Ovary (tissue), 10 donors: ENCODE measurements at regions of chr13 and their contacts with region 1.

Region 1: GRCh38 chr13:30114571-30115256 is 192.6 kb downstream of the KATNAL1 start:
- DNase-seq: peak; percentile 80 to 93 (median 88)
- H3K4me3 ChIP-seq: peak overlapping the region; percentile 54
- H3K27ac ChIP-seq: peak overlapping the region; percentile 27 to 50
- H3K4me1 ChIP-seq: peaks cover 2% of the 10 kb centered on the region
- H3K27me3 ChIP-seq: no peaks in the 10 kb centered on the region
- CTCF ChIP-seq: peak; percentile 54 to 89 (median 79)
- EP300 ChIP-seq: no peak
- POLR2A ChIP-seq: no peak

Region 2: DNA sequence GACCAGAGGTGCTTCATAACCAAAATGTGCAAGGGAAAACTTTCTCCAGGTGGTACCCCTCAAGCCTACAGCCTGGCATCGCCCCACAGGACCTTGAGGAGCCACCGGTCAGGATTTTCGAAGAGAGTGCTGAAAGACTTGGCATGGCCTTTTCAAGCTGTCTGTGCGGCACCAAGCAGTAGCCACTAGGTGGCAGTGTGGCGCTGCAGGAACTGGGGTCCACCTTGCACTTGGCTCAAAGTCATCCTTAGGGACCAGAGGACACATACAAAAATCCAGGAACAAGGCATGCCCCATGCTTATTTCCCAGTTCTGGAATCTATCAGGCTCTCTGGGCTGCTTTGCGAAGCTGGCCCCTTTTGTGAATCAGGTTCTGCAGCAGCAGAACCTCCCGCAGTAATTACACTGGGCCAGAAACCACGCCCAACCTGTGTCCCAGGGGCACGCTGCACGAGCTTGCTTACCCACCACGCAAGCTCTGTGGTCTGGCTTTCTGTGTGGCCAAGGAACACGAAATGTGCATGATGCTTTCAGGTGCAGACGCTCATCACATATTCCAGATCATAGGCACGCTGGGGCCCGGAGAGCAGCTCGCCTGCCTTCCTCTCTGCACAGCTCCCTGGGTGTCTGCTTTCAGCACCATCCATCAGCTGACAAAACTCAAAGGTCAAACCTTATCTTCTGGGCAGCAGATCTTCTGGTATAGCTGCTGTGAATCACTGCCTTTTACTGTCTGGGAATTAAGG is 606.4 kb before region 1 on chr13:
- intact Hi-C with region 1: loop called (anchors 2 to 5 kb)
- DNase-seq: peak; percentile 80 to 89 (median 86)
- H3K4me3 ChIP-seq: no peak overlapping the region
- H3K27ac ChIP-seq: no peak overlapping the region
- H3K4me1 ChIP-seq: peaks cover 6% of the 10 kb centered on the region
- H3K27me3 ChIP-seq: no peaks in the 10 kb centered on the region
- CTCF ChIP-seq: peak; percentile 82 to 94 (median 85)
- EP300 ChIP-seq: no peak
- POLR2A ChIP-seq: no peak

Region 3: DNA sequence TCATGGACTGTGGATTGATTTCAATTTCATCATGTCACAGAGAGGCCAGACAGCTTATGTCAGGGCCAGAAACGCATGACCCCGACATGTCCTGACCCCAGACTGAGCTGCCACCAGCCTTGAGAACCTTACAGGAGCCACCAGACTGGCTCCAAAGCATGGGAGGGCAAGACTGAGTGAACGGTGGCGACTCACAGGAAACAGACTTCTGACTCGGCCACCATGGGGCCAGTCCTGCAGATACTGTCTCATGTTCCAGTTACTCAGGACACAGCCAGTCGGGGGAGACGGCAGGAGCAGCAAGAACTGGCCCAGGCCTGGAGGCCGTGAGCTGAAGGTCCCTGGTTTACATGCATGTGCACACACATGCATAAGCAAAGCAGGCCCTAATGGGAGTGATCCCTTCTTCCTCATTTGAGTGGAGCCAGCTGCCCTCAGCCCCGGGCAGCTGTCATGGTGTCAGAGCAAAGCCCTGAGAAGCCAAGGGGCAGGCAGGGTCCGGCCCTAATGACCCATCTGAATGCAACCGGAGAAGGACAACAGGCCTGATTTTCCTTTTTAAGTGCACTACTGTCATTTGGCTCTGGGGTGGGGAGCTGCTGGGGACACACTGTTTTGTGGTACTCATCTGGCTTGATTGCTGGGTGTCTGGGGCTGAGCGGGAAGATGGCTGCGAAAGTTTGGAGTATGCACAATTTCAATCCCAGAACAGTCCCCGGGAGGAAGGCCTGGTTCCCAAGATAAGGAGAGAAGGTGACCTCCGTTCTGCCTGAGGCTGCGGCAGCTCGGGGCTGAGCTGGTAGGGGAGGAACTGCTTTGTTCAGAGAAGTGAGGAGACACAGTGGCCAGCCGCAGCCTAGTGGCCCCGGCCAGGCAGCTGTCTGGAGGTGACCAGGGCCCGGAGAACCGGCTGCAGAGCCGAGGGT is 601.1 kb before region 1 on chr13:
- intact Hi-C with region 1: loop called (anchors 2 to 5 kb)
- DNase-seq: no peak
- H3K4me3 ChIP-seq: no peak overlapping the region
- H3K27ac ChIP-seq: no peak overlapping the region
- H3K4me1 ChIP-seq: peaks cover 2% of the 10 kb centered on the region
- H3K27me3 ChIP-seq: no peaks in the 10 kb centered on the region
- CTCF ChIP-seq: no peak
- EP300 ChIP-seq: no peak
- POLR2A ChIP-seq: no peak

Region 4: DNA sequence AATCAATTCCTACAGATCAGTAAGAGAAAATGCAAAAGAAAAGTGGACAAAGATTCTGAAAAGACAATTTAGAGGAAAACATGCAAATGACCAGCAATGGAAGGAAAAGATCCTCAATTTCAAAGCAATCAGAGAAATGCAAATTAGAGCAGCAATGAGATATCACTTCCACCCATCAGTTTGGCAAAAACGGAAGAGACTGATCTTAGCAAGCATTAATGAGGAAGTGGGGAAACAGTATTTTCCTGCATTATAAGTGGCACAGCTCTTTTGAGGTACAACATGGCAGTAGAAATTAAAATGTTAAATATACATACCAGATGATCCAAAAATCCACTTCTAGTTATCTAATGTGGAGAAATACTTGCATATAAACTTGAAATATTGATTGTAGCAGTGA is 450.1 kb before region 1 on chr13:
- intact Hi-C with region 1: no loop called
- DNase-seq: no peak
- H3K4me3 ChIP-seq: no peak overlapping the region
- H3K27ac ChIP-seq: no peak overlapping the region
- H3K4me1 ChIP-seq: no peaks in the 10 kb centered on the region
- H3K27me3 ChIP-seq: no peaks in the 10 kb centered on the region
- CTCF ChIP-seq: no peak
- EP300 ChIP-seq: no peak
- POLR2A ChIP-seq: no peak

Region 5: GRCh38 chr13:29763436-29764180 is 351.1 kb before region 1 on chr13:
- intact Hi-C with region 1: loop called in 2 of 4 experiments (anchors 5 to 10 kb)
- DNase-seq: no peak
- H3K4me3 ChIP-seq: no peak overlapping the region
- H3K27ac ChIP-seq: no peak overlapping the region
- H3K4me1 ChIP-seq: no peaks in the 10 kb centered on the region
- H3K27me3 ChIP-seq: no peaks in the 10 kb centered on the region
- CTCF ChIP-seq: no peak
- EP300 ChIP-seq: no peak
- POLR2A ChIP-seq: no peak

Region 6: GRCh38 chr13:29771247-29771646 is 343.5 kb before region 1 on chr13:
- intact Hi-C with region 1: loop called (anchors 5 to 10 kb)
- DNase-seq: no peak
- H3K4me3 ChIP-seq: no peak overlapping the region
- H3K27ac ChIP-seq: no peak overlapping the region
- H3K4me1 ChIP-seq: no peaks in the 10 kb centered on the region
- H3K27me3 ChIP-seq: no peaks in the 10 kb centered on the region
- CTCF ChIP-seq: peak in 1 of 3 donors; percentile 39
- EP300 ChIP-seq: no peak
- POLR2A ChIP-seq: no peak

Region 7: DNA sequence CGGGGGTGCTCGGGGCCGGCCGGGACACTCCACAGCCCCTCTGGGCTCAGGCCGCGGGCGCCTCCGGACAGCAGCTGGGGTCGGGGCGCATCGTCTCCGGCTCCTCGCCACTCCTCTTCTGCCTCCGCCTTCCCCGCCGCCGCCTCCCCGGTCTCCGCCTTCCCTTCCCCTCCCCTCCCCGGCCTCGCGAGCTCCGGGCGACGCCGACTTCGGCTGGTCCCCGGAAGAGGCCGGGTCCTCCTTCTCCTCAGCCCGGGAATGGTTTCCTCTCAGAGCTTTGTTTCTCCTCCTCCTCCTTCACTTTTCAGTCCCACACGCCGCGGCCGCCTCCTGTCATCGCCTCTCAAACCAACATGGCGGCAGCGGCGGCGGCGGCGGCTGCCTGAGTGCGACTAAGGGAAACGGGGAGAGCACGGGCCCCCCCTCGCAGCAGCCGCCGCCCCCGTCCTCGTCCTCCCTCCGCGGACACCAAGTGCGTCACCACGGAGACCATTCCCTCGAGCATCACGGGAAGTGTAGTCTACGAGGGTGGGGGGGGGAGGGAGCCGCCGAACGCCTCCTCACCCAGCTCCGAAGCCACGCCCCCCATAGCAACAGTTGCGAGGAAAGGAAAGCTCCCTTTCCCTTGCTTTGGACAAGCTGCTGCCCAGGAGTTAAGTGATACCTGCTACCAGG is 264.4 kb before region 1 on chr13 and contains the start of gene UBL3:
- intact Hi-C with region 1: loop called in 1 of 4 experiments (anchors 10 kb)
- DNase-seq: peak; percentile 96 to 98 (median 97)
- H3K4me3 ChIP-seq: peak within 1 kb of the TSS; percentile 89
- H3K27ac ChIP-seq: peak within 1 kb of the TSS; percentile 96 to 97
- H3K4me1 ChIP-seq: no peaks in the 10 kb centered on the region
- H3K27me3 ChIP-seq: no peaks in the 10 kb centered on the region
- CTCF ChIP-seq: peak in 1 of 3 donors; percentile 18
- EP300 ChIP-seq: no peak
- POLR2A ChIP-seq: peak; percentile 89
- total RNA-seq, gene UBL3: 30.9 to 41.4 (median 35.7) TPM

Region 8: GRCh38 chr13:30132623-30133553 is 18.2 kb after region 1 on chr13:
- intact Hi-C with region 1: no loop called
- DNase-seq: peak; percentile 97 to 99 (median 98)
- H3K4me3 ChIP-seq: no peak overlapping the region
- H3K27ac ChIP-seq: no peak overlapping the region
- H3K4me1 ChIP-seq: peaks cover 2% of the 10 kb centered on the region
- H3K27me3 ChIP-seq: no peaks in the 10 kb centered on the region
- CTCF ChIP-seq: peak; percentile 81 to 93 (median 89)
- EP300 ChIP-seq: no peak
- POLR2A ChIP-seq: no peak

Region 9: GRCh38 chr13:30241532-30241931 is 126.8 kb after region 1 on chr13:
- intact Hi-C with region 1: no loop called
- DNase-seq: no peak
- H3K4me3 ChIP-seq: no peak overlapping the region
- H3K27ac ChIP-seq: no peak overlapping the region
- H3K4me1 ChIP-seq: no peaks in the 10 kb centered on the region
- H3K27me3 ChIP-seq: no peaks in the 10 kb centered on the region
- CTCF ChIP-seq: no peak
- EP300 ChIP-seq: no peak
- POLR2A ChIP-seq: no peak

Region 10: DNA sequence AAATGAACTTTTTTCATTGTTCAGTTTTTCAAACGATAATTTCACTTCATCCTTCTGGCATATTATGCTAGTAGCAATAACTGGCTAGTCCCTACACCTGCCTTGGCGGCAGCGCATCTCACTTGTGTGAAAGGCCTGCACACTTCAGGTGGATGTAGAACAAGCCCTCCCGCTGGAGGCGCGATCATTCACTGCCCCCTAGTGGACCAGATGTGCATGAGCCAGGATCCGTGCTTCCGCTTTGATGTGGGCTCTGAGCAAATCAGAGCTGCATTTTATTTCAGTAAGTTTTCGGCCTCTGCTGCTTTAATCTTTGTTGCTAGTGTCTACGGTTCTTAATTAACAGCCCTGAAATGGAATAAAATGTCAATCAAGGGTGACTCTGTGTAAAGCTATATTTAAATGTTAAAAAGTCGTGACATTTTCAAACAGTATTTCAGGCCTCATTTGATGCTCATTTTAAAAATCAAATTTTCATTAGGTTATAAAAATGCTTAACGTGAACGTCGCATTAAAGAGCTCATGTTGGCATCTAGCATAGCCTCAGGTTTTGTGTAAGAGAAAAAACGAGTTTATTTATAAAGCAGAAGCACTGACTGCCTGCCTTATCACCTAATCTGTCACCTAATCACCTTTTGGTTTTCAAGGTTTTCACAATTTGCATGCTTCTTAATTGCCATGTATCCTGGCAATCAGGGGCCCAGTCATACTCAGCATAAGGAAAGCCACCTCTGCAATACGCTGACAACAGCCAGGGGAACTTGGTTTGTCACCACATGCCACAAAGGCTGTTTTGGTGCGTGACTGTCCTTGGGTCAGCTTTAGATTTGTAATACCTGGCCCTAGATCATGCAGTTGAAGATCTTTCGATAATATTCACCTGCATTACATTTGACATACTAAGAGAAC is 929.9 kb after region 1 on chr13:
- intact Hi-C with region 1: loop called in 1 of 4 experiments (anchors 10 kb)
- DNase-seq: peak; percentile 68 to 85 (median 81)
- H3K4me3 ChIP-seq: no peak overlapping the region
- H3K27ac ChIP-seq: no peak overlapping the region
- H3K4me1 ChIP-seq: peaks cover 4% of the 10 kb centered on the region
- H3K27me3 ChIP-seq: no peaks in the 10 kb centered on the region
- CTCF ChIP-seq: peak; percentile 60 to 82 (median 74)
- EP300 ChIP-seq: no peak
- POLR2A ChIP-seq: no peak